ENCODE measurements at regions of chr5 and their contacts with region 1.

Region 1: DNA sequence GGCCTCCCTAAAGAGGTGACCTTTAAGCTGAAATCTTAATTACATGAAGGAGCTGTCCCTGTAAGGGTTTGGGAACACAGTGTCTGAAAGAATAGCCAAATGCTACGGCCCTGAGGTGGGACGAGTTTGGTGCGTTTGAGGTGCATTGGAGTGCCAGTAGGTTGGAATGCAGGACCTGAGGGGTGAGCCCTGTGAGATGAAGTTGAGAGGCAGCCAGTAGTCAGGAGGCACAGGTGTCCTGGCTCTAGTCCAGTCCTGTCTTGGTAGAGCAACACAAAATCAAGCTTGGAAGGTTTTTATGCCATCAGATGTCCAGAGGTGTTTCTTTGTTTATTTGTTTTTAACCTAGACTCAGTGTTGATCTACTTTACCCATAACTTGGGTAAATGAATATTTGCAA is 108.5 kb downstream of the ARHGAP26 start:
- DNase-seq: no peak
- H3K4me3 ChIP-seq: no peak overlapping the region
- H3K27ac ChIP-seq: no peak overlapping the region
- H3K4me1 ChIP-seq: peaks cover 15% of the 10 kb centered on the region
- H3K27me3 ChIP-seq: no peaks in the 10 kb centered on the region
- CTCF ChIP-seq: no peak
- POLR2A ChIP-seq: no peak

Region 2: DNA sequence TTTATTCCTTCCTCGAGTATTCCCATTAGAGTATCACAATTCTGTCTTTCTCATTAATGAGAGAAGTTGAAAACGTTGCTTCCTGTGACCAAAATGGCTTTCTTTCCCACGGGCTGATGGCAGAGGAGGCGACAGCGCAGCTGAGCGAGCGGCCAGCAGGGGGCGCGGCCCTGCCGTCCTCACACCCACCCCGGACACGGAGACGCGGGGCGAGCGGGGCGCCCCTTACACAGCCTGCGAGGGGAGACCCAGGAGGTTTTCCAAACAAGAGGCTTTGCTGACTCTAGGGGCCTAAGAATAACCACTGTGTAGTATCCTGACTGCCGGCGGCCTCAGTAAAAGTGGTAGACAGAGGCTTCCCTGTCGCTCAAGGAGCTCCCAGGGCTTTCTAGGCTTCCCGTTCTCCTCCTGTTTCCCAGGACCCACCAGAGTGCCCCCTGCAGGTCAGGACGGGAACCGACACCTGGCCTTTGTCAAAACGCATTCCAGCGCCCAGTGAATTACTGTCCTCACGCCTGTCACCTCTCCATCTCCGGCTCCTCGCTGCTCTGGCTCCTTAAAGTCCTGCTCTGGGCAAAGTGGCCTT is 165.4 kb before region 1 on chr5:
- intact Hi-C with region 1: loop called (anchors 5 kb)
- DNase-seq: no peak
- H3K4me3 ChIP-seq: peak overlapping the region; percentile 45 to 47
- H3K27ac ChIP-seq: peak overlapping the region; percentile 76
- H3K4me1 ChIP-seq: no peaks in the 10 kb centered on the region
- H3K27me3 ChIP-seq: no peaks in the 10 kb centered on the region
- CTCF ChIP-seq: peak; percentile 71 to 99 (median 93)
- POLR2A ChIP-seq: no peak

Measured in vagina (tissue), 2 donors.